Mammary epithelial cell (primary cell): ENCODE measurements at regions of chr1 and their contacts with region 1.

Region 1: GRCh38 chr1:39609618-39610331 is 29.7 kb downstream of the HEYL start:
- DNase-seq: peak; percentile 15
- H3K4me3 ChIP-seq: no peak overlapping the region
- H3K27ac ChIP-seq: no peak overlapping the region
- H3K4me1 ChIP-seq: peaks cover 4% of the 10 kb centered on the region
- H3K27me3 ChIP-seq: no peaks in the 10 kb centered on the region
- CTCF ChIP-seq: peak; percentile 59 to 64

Region 2: GRCh38 chr1:39575191-39576015 is 34.4 kb before region 1 on chr1:
- CTCF ChIA-PET with region 1: no interaction called
- dilution Hi-C with region 1: no loop called
- in situ Hi-C with region 1: no loop called
- intact Hi-C with region 1: loop called (anchors 1 kb)
- DNase-seq: peak; percentile 41
- H3K4me3 ChIP-seq: peak overlapping the region; percentile 71 to 99 (median 90)
- H3K27ac ChIP-seq: peak overlapping the region; percentile 74
- H3K4me1 ChIP-seq: peaks cover 18% of the 10 kb centered on the region
- H3K27me3 ChIP-seq: no peaks in the 10 kb centered on the region
- CTCF ChIP-seq: no peak

Region 3: DNA sequence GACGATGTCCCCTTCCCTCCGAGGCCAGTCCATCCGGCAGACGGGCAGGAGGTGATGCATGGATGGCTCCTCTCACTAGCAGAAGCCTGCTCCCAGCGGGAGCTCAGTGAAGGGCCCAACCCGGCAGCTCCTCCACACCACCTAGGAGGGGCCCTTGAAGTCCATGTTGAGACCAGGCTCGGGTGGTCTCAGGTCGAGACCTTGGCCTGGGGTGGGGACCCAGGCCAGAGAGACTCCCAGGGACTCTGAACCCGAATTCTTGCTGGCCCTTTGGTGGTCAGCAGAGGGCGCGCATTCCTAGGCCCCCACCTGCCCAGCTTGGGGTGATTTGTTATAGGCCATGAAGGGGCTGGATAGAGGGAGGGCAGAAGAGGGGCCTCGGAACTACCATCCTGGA is 62.8 kb after region 1 on chr1:
- CTCF ChIA-PET with region 1: no interaction called
- dilution Hi-C with region 1: no loop called
- in situ Hi-C with region 1: no loop called
- intact Hi-C with region 1: no loop called
- DNase-seq: no peak
- H3K4me3 ChIP-seq: no peak overlapping the region
- H3K27ac ChIP-seq: no peak overlapping the region
- H3K4me1 ChIP-seq: peaks cover 18% of the 10 kb centered on the region
- H3K27me3 ChIP-seq: peaks cover 19% of the 10 kb centered on the region
- CTCF ChIP-seq: peak in 1 of 2 donors; percentile 11

Region 4: GRCh38 chr1:39711104-39711965 is 101.6 kb after region 1 on chr1:
- CTCF ChIA-PET with region 1: interaction called, 26 read pairs
- dilution Hi-C with region 1: loop called (anchors 5 kb)
- in situ Hi-C with region 1: no loop called
- intact Hi-C with region 1: no loop called
- DNase-seq: no peak
- H3K4me3 ChIP-seq: no peak overlapping the region
- H3K27ac ChIP-seq: no peak overlapping the region
- H3K4me1 ChIP-seq: no peaks in the 10 kb centered on the region
- H3K27me3 ChIP-seq: no peaks in the 10 kb centered on the region
- CTCF ChIP-seq: no peak